CD4-positive, alpha-beta memory T cell (primary cell): ENCODE measurements at regions of chr3 and their contacts with region 1.

Region 1: DNA sequence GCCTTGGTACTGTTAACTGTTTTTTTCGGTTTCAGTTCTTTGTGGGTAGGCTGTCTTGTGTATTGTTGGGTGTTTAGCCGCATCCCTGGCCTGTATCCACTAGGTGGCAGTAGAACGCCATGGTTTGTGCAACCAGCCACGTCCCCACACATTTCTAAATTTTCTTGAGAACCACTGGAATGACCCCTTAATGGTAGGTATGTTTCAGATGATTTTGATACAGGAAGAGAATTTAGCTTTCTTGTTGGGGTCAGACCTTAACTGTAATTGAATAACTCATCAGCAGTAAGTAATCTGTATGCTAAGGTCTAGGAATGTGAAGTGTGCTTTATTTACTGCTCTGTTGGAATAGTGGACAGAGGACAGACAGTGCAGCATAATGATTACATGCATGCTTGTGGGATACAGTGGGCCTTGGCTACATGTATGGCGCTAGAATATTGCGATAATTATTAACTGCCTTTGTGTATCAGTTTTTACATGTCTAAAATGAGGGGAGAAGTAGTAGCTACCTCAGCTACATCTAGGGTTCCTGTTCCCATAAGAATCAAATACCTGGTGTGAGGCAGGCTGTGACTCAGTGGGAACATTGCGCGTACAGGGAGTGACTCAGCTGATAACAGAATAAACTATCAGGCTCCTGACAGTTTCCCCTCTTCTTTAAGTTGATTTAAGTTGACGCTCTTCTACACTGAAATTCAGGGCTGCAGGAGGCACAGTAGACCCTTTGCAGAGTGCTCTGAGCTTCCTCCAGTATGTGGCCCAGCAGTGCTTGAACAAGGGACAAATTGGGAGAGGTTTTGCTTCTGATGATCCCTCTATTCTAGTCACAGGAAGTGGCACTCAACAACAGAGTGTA is 25.0 kb upstream of the GPR171 start:
- DNase-seq: peak; percentile 74 to 78 (median 76)
- H3K4me3 ChIP-seq: no peak overlapping the region
- H3K4me3 Mint-ChIP-seq: peak overlapping the region in 3 of 8 donors; percentile 6 to 63 (median 41)
- H3K27ac ChIP-seq: no peak overlapping the region
- H3K27ac Mint-ChIP-seq: peak overlapping the region in 6 of 7 donors; percentile 2 to 70 (median 49)
- H3K4me1 ChIP-seq: peaks cover 23% of the 10 kb centered on the region
- H3K4me1 Mint-ChIP-seq: peaks cover 26 to 51% (median 35%) of the 10 kb centered on the region in 4 donors
- H3K27me3 ChIP-seq: no peaks in the 10 kb centered on the region
- H3K27me3 Mint-ChIP-seq: no peaks in the 10 kb centered on the region

Region 2: GRCh38 chr3:150996731-150997130 is 231.3 kb before region 1 on chr3:
- CTCF ChIA-PET with region 1: no interaction called
- POLR2A ChIA-PET with region 1: no interaction called
- intact Hi-C with region 1: no loop called
- DNase-seq: no peak
- H3K4me3 ChIP-seq: no peak overlapping the region
- H3K4me3 Mint-ChIP-seq: no peak overlapping the region
- H3K27ac ChIP-seq: no peak overlapping the region
- H3K27ac Mint-ChIP-seq: no peak overlapping the region
- H3K4me1 ChIP-seq: no peaks in the 10 kb centered on the region
- H3K4me1 Mint-ChIP-seq: peaks cover 0 to 4% (median 0%) of the 10 kb centered on the region in 4 donors
- H3K27me3 ChIP-seq: no peaks in the 10 kb centered on the region
- H3K27me3 Mint-ChIP-seq: peaks cover 16 to 22% of the 10 kb centered on the region in 2 donors

Region 3: GRCh38 chr3:151156618-151157216 is 71.3 kb before region 1 on chr3:
- CTCF ChIA-PET with region 1: interaction called, 29 read pairs
- POLR2A ChIA-PET with region 1: no interaction called
- intact Hi-C with region 1: no loop called
- DNase-seq: peak; percentile 42 to 49 (median 45)
- H3K4me3 ChIP-seq: no peak overlapping the region
- H3K4me3 Mint-ChIP-seq: no peak overlapping the region
- H3K27ac ChIP-seq: no peak overlapping the region
- H3K27ac Mint-ChIP-seq: no peak overlapping the region
- H3K4me1 ChIP-seq: no peaks in the 10 kb centered on the region
- H3K4me1 Mint-ChIP-seq: peaks cover 0 to 2% (median 0%) of the 10 kb centered on the region in 4 donors
- H3K27me3 ChIP-seq: no peaks in the 10 kb centered on the region
- H3K27me3 Mint-ChIP-seq: peaks cover 8% of the 10 kb centered on the region in 2 donors

Region 4: GRCh38 chr3:151203051-151203420 is 25.0 kb before region 1 on chr3 and contains the start of gene GPR171:
- CTCF ChIA-PET with region 1: interaction called, 33 read pairs
- POLR2A ChIA-PET with region 1: interaction called, 8 read pairs
- intact Hi-C with region 1: loop called (anchors 1 kb)
- DNase-seq: peak; percentile 80 to 87 (median 82)
- H3K4me3 ChIP-seq: peak within 1 kb of the TSS; percentile 59 to 63
- H3K4me3 Mint-ChIP-seq: peak within 1 kb of the TSS; percentile 73 to 89 (median 86)
- H3K27ac ChIP-seq: peak within 1 kb of the TSS; percentile 75
- H3K27ac Mint-ChIP-seq: peak within 1 kb of the TSS; percentile 87 to 98 (median 97)
- H3K4me1 ChIP-seq: peaks cover 83% of the 10 kb centered on the region
- H3K4me1 Mint-ChIP-seq: peaks cover 45 to 94% (median 59%) of the 10 kb centered on the region in 4 donors
- H3K27me3 ChIP-seq: no peaks in the 10 kb centered on the region
- H3K27me3 Mint-ChIP-seq: no peaks in the 10 kb centered on the region
- total RNA-seq, gene GPR171: 116 to 129 TPM

Region 5: GRCh38 chr3:151265866-151266265 is 37.8 kb after region 1 on chr3:
- CTCF ChIA-PET with region 1: interaction called, 16 read pairs
- POLR2A ChIA-PET with region 1: no interaction called
- intact Hi-C with region 1: no loop called
- DNase-seq: no peak
- H3K4me3 ChIP-seq: no peak overlapping the region
- H3K4me3 Mint-ChIP-seq: no peak overlapping the region
- H3K27ac ChIP-seq: no peak overlapping the region
- H3K27ac Mint-ChIP-seq: no peak overlapping the region
- H3K4me1 ChIP-seq: peaks cover 10% of the 10 kb centered on the region
- H3K4me1 Mint-ChIP-seq: peaks cover 10 to 25% (median 13%) of the 10 kb centered on the region in 4 donors
- H3K27me3 ChIP-seq: no peaks in the 10 kb centered on the region
- H3K27me3 Mint-ChIP-seq: peaks cover 0 to 1% of the 10 kb centered on the region in 2 donors

Region 6: DNA sequence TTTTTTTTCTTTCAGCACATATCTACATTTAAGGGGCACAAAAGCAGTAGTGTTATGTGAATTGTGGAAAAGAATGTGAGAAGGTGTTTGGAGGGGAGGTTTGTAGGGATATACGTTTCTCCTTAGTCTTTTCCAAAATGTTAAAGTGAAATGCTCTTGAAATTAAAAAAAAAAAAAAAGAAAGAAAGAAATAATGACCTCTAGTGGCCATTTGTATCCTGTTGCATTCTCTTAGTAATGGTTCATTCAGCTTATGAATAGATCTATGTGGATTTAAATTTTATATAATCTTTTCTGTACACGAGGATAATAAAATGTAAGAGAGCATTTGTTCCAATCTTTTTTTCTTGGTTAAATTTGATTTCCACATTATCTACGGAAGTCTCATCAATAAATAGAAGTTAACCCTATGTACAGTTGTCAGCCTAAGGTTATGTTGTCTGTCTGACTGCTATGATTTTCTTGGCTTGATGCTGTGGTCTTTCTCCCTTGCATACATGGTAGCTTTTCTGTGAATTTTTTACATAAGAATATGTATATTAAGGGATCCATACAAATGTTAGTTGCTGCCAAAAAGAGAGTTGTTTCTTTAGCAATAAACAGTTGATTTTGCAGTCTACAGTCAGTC is 99.6 kb after region 1 on chr3:
- CTCF ChIA-PET with region 1: interaction called, 34 read pairs
- POLR2A ChIA-PET with region 1: no interaction called
- intact Hi-C with region 1: loop called (anchors 1 kb)
- DNase-seq: peak in 2 of 5 donors; percentile 4 to 11
- H3K4me3 ChIP-seq: no peak overlapping the region
- H3K4me3 Mint-ChIP-seq: no peak overlapping the region
- H3K27ac ChIP-seq: no peak overlapping the region
- H3K27ac Mint-ChIP-seq: no peak overlapping the region
- H3K4me1 ChIP-seq: no peaks in the 10 kb centered on the region
- H3K4me1 Mint-ChIP-seq: peaks cover 2 to 8% (median 4%) of the 10 kb centered on the region in 4 donors
- H3K27me3 ChIP-seq: no peaks in the 10 kb centered on the region
- H3K27me3 Mint-ChIP-seq: peaks cover 7 to 8% of the 10 kb centered on the region in 2 donors

Region 7: DNA sequence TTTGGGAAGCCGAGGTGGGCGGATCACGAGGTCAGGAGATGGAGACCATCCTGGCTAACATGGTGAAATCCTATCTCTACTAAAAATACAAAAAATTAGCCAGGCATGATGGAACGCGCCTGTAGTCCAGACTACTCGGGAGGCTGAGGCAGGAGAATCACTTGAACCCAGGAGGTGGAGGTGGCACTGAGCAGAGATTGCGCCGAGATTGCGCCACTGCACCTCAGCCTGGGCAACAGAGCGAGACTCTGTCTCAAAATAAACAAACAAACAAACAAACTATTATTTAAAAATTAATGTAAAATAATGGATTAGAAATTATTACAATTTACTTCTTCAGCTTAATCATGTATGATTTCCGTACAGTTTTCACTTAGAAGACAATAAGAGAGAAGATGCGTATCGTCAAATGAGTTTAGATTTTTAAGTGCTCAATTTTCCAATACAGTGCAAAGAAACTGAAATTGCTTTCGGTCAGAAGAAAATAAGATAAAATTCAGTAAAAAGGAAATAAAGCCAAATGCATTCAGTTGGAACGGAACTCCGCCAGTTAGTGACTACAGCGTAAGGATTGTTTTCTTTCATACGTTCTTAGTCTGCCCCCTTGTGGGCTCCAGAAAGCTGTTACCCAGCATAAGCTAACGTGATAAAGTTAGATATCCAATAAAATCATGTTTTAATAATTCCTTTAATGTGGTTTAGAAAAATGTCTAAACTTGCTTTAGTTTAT is 610.7 kb after region 1 on chr3:
- CTCF ChIA-PET with region 1: interaction called, 4 read pairs
- POLR2A ChIA-PET with region 1: no interaction called
- intact Hi-C with region 1: loop called (anchors 1 kb)
- DNase-seq: peak in 4 of 5 donors; percentile 19 to 32 (median 30)
- H3K4me3 ChIP-seq: no peak overlapping the region
- H3K4me3 Mint-ChIP-seq: no peak overlapping the region
- H3K27ac ChIP-seq: no peak overlapping the region
- H3K27ac Mint-ChIP-seq: no peak overlapping the region
- H3K4me1 ChIP-seq: no peaks in the 10 kb centered on the region
- H3K4me1 Mint-ChIP-seq: peaks cover 0 to 2% (median under 1%) of the 10 kb centered on the region in 4 donors
- H3K27me3 ChIP-seq: no peaks in the 10 kb centered on the region
- H3K27me3 Mint-ChIP-seq: peaks cover 5 to 7% of the 10 kb centered on the region in 2 donors

Region 8: DNA sequence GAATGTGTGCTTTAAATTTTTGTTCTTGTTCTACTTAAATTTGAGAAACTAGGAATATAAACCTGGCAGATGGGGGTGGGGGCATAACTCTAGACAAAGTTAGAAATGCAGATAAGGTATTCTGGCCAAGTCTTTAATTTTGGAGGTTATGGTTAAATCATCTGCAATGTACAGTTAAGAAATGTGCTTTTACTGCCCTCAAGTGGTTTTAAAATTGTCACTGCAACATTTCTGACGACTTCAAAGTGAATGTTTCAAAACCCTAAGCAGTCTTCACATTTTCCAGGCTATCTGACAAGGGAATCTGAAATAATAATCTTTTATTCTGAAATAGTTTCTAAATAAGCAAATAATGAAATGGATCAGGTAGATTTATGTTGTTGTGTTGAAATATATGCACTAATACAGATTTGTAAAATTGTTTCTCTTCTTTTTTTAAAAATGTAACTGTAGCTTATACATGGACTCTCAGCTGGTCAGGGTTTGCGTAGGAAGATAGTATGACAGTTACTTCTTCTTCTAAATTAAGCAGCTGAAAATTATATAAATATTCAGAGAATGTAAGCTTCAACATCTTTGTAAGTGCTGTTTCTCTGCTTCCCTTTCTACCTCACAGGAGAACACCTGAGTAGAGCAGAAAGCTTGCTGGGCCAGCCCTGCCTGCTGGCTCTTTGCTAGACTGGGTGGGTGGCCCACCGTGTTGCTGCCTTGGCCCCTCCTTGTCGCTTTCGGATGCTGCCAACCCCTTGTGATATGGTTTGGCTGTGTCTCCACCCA is 690.4 kb after region 1 on chr3:
- CTCF ChIA-PET with region 1: interaction called, 6 read pairs
- POLR2A ChIA-PET with region 1: no interaction called
- intact Hi-C with region 1: loop called (anchors 1 kb)
- DNase-seq: peak in 4 of 5 donors; percentile 12 to 28 (median 18)
- H3K4me3 ChIP-seq: no peak overlapping the region
- H3K4me3 Mint-ChIP-seq: no peak overlapping the region
- H3K27ac ChIP-seq: no peak overlapping the region
- H3K27ac Mint-ChIP-seq: no peak overlapping the region
- H3K4me1 ChIP-seq: no peaks in the 10 kb centered on the region
- H3K4me1 Mint-ChIP-seq: no peaks in the 10 kb centered on the region
- H3K27me3 ChIP-seq: no peaks in the 10 kb centered on the region
- H3K27me3 Mint-ChIP-seq: peaks cover 0 to 3% of the 10 kb centered on the region in 2 donors